GM13976 (cell line): ENCODE measurements at regions of chr3 and their contacts with region 1.

Region 1: DNA sequence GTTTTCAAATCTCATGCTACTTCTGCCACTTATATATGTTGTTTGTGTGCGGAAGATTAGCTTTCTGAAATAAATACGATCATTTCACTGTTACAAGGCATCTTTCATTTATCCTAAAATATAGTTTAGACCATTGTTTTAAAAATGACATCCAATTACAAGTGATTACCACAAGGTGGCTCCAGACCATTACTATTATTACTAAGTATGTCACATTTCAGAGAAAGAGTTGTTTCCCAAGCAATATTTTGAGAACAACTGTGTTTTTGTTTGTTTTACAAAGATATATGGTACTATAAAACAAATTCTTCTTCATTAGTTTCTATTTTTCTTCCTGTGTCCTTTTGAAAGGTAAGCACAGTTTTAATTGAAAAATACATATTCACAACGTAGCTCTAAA is 136.0 kb upstream of the RAP2B start:
- DNase-seq: peak; percentile 24
- CTCF ChIP-seq: peak; percentile 14

Region 2: GRCh38 chr3:153209596-153209995 is 183.6 kb after region 1 on chr3:
- in situ Hi-C with region 1: no loop called
- DNase-seq: no peak
- CTCF ChIP-seq: no peak

Region 3: DNA sequence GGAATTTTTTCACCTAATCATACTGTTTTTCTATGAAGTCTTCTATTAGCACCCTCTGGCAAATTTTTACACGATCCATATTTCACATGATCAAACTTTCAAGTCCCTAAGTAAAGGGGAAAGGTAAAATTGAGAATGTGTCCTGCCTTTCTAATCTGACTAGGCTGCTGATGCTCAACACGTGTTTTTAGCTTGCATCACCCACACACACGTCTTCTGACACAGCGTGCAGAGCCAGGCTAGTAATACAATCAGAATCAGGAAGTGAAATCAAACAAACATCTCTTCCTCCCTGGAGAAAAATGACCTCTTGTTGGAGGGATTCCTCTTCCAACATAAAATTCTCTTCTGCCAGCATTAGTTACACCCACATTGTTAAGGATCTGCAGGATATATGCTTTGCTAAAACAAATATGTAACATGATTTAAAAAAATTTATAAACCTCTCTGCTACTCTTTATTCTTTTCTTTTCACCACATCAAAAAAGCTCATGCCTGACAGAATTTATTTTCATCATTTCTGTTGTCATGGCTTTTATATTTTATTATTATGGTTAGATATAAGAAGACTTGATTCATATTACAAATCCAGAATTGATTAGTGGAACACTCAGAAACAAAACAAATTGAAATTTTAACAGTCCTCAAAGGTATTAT is 258.4 kb after region 1 on chr3:
- in situ Hi-C with region 1: loop called (anchors 25 kb)
- DNase-seq: peak; percentile 36
- CTCF ChIP-seq: no peak

Region 4: DNA sequence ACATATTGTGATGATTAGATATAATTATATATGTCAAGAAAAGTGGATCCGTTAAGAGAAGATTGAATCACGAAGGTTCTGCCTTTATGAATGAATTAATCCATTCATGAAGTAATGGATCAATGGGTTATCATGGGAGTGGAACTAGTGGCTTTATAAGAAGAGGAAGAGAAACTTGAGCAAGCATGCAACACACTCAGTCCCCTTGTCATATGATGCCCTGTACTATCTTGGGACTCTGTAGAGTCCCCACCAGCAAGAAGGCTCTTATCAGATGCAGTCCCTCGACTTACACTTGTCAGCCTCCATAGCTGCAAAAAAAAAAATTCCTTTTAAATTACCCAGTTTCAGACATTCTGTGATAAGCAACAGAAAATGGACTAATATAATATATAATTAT is 437.9 kb after region 1 on chr3:
- in situ Hi-C with region 1: no loop called
- DNase-seq: peak; percentile 34
- CTCF ChIP-seq: no peak

Region 5: DNA sequence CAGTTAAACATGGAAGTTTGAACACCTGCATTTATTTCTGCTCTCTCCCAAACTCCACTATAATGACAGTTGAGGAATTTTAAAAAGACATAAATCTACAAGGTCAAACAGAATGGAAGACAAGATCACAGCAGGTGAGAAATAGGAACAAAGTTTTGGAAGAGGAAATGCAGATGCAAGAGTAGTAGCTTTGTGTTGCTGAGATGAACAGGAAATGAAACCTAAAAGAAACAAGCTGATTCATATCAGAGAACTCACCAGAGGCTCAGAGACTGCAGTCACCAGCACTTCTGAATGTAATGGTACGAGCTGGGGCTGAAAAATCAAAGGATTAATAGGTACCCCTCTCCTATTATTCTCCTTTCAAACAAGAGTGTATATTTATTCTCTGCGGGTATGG is 595.9 kb after region 1 on chr3:
- in situ Hi-C with region 1: loop called (anchors 25 kb)
- DNase-seq: peak; percentile 6
- CTCF ChIP-seq: no peak

Region 6: DNA sequence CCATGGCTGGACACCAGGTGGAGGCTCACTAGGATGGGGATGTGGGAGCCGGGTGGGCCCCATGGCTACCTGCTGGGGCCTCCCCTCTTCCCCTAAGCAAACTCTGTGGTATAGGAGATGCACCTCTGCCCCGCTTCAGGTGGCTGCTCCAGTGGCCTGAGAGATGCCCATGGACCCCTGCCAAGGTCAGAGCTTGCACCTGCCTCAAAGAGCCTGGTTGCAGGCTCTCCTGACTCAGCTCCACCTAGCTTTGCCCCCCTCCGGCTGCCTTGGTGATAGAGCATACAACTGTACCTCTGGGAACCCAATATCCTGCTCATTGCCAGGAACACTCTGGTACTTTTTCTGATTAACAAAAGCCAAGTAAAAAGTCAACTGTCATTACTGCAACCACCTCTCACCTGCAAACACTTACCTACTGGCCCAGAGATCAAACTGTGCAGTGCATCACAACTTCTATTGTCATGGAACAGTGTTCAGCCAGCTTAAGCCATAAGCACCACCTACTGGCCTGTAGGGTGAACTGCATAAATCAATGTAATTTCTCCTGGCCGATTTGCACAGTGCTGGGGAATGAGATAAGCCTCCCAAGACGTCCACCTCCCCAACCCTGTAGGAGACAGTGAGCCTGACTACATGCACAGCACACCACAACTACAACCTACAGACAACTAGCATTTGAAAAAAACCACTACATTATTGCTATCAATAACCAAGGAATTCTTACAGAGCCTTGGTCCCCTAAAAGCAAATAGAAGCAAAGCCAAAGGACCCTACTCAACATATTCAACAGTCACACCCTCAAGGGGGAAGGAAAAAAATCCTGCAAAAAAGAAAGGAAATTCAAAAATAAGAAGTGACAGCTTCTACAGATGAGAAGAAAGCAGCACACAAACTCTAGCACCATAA is 742.8 kb after region 1 on chr3:
- in situ Hi-C with region 1: loop called (anchors 25 kb)
- DNase-seq: peak; percentile 52
- CTCF ChIP-seq: peak; percentile 73